CD4-positive, alpha-beta T cell (primary cell): ENCODE measurements at regions of chr17 and their contacts with region 1.

Region 1: GRCh38 chr17:78112518-78113226 is 15.9 kb downstream of the TMC6 start:
- DNase-seq: peak; percentile 55 to 87 (median 77)
- ATAC-seq: peak; percentile 73
- H3K4me3 ChIP-seq: no peak overlapping the region
- H3K4me3 Mint-ChIP-seq: no peak overlapping the region
- H3K27ac ChIP-seq: peak overlapping the region; percentile 7 to 46
- H3K27ac Mint-ChIP-seq: peak overlapping the region; percentile 84
- H3K4me1 ChIP-seq: peaks cover 72% of the 10 kb centered on the region
- H3K4me1 Mint-ChIP-seq: peaks cover 36% of the 10 kb centered on the region
- H3K27me3 ChIP-seq: no peaks in the 10 kb centered on the region
- H3K27me3 Mint-ChIP-seq: no peaks in the 10 kb centered on the region
- CTCF ChIP-seq: peak; percentile 100

Region 2: DNA sequence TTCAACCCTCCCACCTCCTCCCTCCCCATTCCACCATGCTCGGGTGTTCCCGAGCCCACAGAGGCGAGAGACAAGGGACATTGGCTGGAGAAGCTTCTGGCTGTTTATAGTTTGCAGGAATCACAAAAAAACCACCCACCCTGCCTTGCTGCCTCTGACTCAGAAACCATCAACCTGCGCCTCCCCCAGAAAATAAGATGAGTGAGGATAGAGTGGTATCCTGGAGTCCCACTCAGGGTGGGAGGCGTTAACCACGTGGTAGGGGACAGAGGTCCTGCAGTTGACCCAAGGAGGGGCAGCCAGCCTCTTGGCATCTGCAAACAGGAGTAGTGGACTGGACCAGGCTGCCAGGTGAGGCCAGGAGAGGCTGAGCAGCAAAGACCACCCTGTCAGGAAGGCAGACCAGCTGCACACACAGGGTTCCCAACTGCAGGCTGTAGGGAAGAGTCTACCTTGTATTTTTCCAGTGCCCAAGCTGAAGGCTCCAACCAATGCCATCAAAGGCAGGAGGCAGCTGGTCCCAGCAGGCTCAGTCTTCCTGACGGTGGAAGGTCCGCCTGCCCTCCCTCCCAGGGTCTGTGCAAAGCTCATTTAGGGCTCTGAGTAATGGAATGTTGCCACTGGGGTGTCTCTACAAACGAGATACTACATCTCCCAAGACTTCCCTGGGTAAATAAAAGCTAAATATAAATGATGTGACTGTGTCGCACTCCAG is 355.7 kb before region 1 on chr17:
- CTCF ChIA-PET with region 1: no interaction called
- POLR2A ChIA-PET with region 1: no interaction called
- intact Hi-C with region 1: no loop called
- DNase-seq: no peak
- ATAC-seq: no peak
- H3K4me3 ChIP-seq: no peak overlapping the region
- H3K4me3 Mint-ChIP-seq: no peak overlapping the region
- H3K27ac ChIP-seq: no peak overlapping the region
- H3K27ac Mint-ChIP-seq: no peak overlapping the region
- H3K4me1 ChIP-seq: no peaks in the 10 kb centered on the region
- H3K4me1 Mint-ChIP-seq: no peaks in the 10 kb centered on the region
- H3K27me3 ChIP-seq: peaks cover 0 to 3% of the 10 kb centered on the region in 2 experiments
- H3K27me3 Mint-ChIP-seq: no peaks in the 10 kb centered on the region
- CTCF ChIP-seq: no peak

Region 3: DNA sequence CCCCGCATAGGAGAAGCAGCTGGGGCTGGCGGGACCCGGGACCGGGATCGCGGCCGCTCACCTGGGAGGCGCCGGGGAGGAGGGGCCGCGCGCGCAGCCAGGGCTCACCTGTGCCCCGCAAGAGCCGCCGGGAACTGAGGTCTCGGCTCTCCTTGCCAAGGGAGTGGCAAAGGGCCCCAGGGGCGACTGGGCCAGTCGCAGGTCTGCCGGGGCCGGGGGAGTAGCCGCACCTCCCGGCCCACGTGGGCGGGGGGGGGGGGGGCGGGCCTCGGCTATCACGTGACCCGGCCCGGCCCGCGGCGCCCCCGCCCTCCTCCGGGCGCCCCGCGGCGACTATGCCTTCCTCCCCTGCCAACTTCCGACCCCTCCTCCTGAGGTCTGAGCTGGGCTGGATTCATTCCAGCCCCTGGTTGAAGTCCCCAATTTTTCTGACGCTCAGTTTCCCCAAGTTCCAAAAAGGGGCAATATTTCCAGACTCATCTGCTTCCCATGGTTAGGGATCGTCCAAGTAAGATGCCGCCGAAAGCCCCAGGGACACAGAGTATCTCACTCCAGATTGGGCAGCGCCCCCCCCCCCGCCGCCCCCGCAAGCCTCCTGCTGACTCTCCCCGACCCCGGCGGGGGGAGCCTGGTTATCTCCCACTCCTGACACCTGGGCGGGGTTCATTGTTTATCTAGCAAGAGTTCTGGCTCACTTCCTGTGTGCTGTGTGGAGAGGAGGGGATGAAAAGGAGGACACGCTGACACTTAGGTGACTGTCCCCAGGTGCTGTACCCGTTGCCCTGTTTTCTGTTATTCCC is 16.1 kb after region 1 on chr17 and contains the start of gene TMC6:
- CTCF ChIA-PET with region 1: interaction called, 37 read pairs
- POLR2A ChIA-PET with region 1: interaction called, 766 read pairs
- intact Hi-C with region 1: no loop called
- DNase-seq: peak; percentile 58 to 89 (median 75)
- ATAC-seq: peak; percentile 43
- H3K4me3 ChIP-seq: peak within 1 kb of the TSS; percentile 94
- H3K4me3 Mint-ChIP-seq: peak within 1 kb of the TSS; percentile 100
- H3K27ac ChIP-seq: peak within 1 kb of the TSS; percentile 75 to 92
- H3K27ac Mint-ChIP-seq: peak within 1 kb of the TSS; percentile 96
- H3K4me1 ChIP-seq: peaks cover 76% of the 10 kb centered on the region
- H3K4me1 Mint-ChIP-seq: peaks cover 56% of the 10 kb centered on the region
- H3K27me3 ChIP-seq: no peaks in the 10 kb centered on the region
- H3K27me3 Mint-ChIP-seq: no peaks in the 10 kb centered on the region
- CTCF ChIP-seq: no peak
- total RNA-seq, gene TMC6: 645 to 659 TPM

Region 4: GRCh38 chr17:78133971-78134898 is 21.6 kb after region 1 on chr17:
- CTCF ChIA-PET with region 1: interaction called, 37 read pairs
- POLR2A ChIA-PET with region 1: interaction called, 766 read pairs
- intact Hi-C with region 1: loop called (anchors 1 kb)
- DNase-seq: peak; percentile 71 to 93 (median 78)
- ATAC-seq: peak; percentile 34
- H3K4me3 ChIP-seq: peak overlapping the region; percentile 94
- H3K4me3 Mint-ChIP-seq: peak overlapping the region; percentile 88
- H3K27ac ChIP-seq: peak overlapping the region; percentile 7 to 92
- H3K27ac Mint-ChIP-seq: peak overlapping the region; percentile 81
- H3K4me1 ChIP-seq: peaks cover 90% of the 10 kb centered on the region
- H3K4me1 Mint-ChIP-seq: peaks cover 80% of the 10 kb centered on the region
- H3K27me3 ChIP-seq: no peaks in the 10 kb centered on the region
- H3K27me3 Mint-ChIP-seq: no peaks in the 10 kb centered on the region
- CTCF ChIP-seq: peak; percentile 75